G401 (cell line): ENCODE measurements at regions of chr21 and their contacts with region 1.

Region 1: DNA sequence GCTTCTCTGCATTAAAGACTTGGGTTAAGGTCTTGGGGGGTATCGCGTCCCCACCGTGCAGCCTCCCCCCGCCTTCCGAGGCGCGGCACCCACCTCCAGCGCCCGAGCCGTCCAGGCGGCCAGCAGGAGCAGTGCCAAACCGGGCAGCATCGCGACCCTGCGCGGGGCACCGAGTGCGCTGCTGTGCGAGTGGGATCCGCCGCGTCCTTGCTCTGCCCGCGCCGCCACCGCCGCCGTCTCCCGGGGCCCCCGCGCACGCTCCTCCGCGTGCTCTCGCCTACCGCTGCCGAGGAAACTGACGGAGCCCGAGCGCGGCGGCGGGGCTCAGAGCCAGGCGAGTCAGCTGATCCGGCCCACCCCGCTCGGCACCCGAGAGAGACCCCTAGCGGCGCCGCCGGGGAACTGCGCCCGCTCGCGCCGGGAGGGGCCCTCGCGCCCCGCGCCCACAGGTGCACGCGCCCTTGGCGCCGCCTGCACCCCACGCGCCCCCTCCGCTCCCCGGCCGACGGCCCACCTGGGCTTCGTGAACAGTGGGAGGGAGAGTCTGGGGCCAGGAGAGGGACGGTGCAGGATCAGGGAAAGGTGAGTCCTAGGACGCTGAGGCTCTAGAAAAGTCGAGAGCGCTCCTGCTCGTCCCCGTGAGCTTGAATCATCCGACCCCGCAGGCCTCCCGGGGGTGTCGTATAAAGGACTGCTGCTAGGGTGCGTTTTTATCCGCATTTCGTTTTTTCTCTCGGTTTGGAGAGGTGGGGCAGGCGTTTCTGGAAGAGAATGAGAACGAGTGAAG is at the start of gene APP:
- DNase-seq: peak; percentile 74
- total RNA-seq, gene APP: 189 and 254 TPM in 2 replicates

Region 2: DNA sequence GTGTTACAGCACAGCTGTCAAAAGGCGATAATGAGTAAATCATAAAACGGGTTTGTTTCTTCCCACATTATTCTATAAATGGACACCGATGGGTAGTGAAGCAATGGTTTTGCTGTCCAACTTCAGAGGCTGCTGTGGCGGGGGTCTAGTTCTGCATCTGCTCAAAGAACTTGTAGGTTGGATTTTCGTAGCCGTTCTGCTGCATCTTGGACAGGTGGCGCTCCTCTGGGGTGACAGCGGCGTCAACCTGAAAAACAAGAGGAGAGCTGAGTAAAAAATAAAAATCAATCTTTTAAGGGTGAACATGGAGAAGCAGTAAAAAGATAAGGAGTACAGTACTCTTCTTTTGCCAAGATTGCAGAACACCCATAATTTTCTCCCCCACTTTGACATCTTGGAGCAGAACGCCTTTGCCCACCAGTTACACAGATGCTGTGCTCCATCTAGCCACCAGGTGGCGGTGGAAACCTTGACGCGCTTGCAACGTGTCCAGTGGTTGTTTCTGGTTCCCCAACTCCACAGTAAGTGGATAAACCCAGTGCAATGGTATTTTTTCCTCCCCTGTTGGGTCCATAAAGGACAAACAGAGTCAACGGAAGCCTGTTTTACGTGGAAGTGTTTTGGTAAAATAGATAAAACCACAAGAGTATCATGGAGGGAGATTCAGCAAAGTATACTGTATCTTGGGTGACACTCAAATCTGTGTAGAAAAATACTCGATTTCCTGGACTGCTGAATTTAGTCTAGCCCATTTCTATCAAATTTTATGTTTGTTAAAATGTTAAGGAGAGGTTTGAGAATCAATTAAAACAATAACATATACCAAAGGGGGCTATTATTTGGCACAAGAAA is 288.9 kb before region 1 on chr21:
- in situ Hi-C with region 1: loop called (anchors 25 kb)
- DNase-seq: peak; percentile 74

Region 3: GRCh38 chr21:26115305-26115704 is 55.4 kb before region 1 on chr21:
- in situ Hi-C with region 1: no loop called
- DNase-seq: peak; percentile 52